ENCODE measurements at regions of chr1 and their contacts with region 1.

Region 1: GRCh38 chr1:239413916-239414315 is 27.5 kb downstream of the CHRM3 start:
- DNase-seq: no peak
- H3K4me3 Mint-ChIP-seq: no peak overlapping the region
- H3K27ac Mint-ChIP-seq: no peak overlapping the region
- H3K4me1 Mint-ChIP-seq: no peaks in the 10 kb centered on the region
- H3K27me3 Mint-ChIP-seq: no peaks in the 10 kb centered on the region

Region 2: DNA sequence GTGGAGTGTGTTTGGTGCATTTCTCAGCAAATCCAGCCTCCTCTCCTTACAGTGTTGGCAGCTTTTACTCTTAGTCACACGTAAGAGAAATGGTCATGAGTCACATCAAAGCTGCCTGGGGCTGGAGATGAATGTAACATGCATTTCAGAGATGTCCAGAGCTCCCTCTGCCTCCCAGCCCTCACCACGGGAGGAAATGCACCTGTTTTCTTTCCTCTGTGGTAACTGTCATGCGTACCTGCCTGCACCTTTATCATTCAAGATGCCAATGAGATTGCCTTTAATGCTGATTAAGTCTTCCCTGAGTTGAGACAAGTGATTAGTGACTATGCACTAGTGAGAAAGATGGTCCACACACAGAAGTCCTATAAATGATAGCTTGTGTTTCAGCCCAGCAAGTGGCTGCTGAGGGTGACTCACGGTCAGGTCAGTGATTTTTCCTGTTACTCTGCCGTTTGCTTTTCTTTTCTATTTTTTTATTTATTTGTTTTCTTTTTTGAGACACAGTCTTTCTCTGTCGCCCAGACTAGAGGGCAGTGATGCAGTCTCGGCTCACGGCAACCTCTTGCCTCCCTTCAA is 400.5 kb after region 1 on chr1:
- intact Hi-C with region 1: loop called (anchors 10 kb)
- DNase-seq: peak; percentile 6
- H3K4me3 Mint-ChIP-seq: no peak overlapping the region
- H3K27ac Mint-ChIP-seq: peak overlapping the region; percentile 4
- H3K4me1 Mint-ChIP-seq: peaks cover 16% of the 10 kb centered on the region
- H3K27me3 Mint-ChIP-seq: peaks cover 1% of the 10 kb centered on the region